ENCODE measurements at regions of chr2 and their contacts with region 1.

Region 1: GRCh38 chr2:200703127-200703925 is 108.4 kb upstream of the BZW1 start:
- H3K4me3 ChIP-seq: no peak overlapping the region
- H3K27ac ChIP-seq: no peak overlapping the region
- H3K4me1 ChIP-seq: peaks cover 2% of the 10 kb centered on the region; the same call in 1 of the 2 replicates
- CTCF ChIP-seq: 0 out of 2 replicates have a peak, but pooled peaks have one; percentile 18

Region 2: GRCh38 chr2:199973703-199974102 is 729.6 kb before region 1 on chr2:
- CTCF ChIA-PET with region 1: interaction called, 12 read pairs
- POLR2A ChIA-PET with region 1: no interaction called
- H3K4me3 ChIP-seq: no peak overlapping the region
- H3K27ac ChIP-seq: no peak overlapping the region
- H3K4me1 ChIP-seq: no peaks in the 10 kb centered on the region
- CTCF ChIP-seq: peak; percentile 58; the same call in 1 of the 2 replicates

Region 3: GRCh38 chr2:200578778-200579177 is 124.5 kb before region 1 on chr2:
- CTCF ChIA-PET with region 1: interaction called, 17 read pairs
- POLR2A ChIA-PET with region 1: no interaction called
- H3K4me3 ChIP-seq: no peak overlapping the region
- H3K27ac ChIP-seq: no peak overlapping the region
- H3K4me1 ChIP-seq: no peaks in the 10 kb centered on the region
- CTCF ChIP-seq: no peak

Region 4: DNA sequence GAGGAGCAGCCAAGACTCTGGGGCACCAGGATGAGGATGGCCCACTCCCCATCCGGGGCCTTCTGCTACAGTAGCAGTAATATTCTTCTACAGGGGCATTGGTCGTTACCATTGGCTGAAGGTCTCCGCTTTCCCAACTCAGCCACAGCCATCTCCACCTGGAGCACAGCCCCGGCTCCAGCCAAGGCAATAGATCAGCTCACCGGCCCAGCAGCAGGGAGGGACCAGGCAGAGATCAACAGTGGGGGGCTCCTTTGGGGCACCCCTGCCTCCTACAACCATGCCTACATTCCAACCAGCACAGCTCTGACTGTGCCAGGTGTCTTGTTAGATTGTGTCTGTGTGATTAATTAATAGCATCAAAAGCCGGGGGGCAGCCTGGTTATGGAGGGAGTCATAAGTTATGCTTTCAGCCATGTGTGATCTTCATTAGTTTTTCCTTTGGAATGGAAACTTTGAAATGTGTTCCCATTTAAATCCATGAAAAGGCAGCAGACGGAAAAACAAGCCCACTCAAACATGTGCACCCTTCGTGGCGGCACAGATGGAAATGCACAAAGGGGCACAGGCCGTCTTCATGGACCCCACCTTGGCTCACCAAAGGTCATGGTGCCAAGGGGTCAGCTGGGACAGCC is 39.8 kb after region 1 on chr2:
- CTCF ChIA-PET with region 1: no interaction called
- POLR2A ChIA-PET with region 1: no interaction called
- H3K4me3 ChIP-seq: no peak overlapping the region
- H3K27ac ChIP-seq: no peak overlapping the region
- H3K4me1 ChIP-seq: peaks cover 12% of the 10 kb centered on the region
- CTCF ChIP-seq: no peak

Measured in HEK293 (cell line).